ENCODE measurements at regions of chr4 and their contacts with region 1.

Region 1: GRCh38 chr4:185534866-185535611 is at the start of gene PDLIM3:
- DNase-seq: peak; percentile 83 to 94
- ATAC-seq: peak; percentile 22 to 81 (median 78)
- H3K4me3 ChIP-seq: peak within 1 kb of the TSS; percentile 90
- H3K27ac ChIP-seq: peak within 1 kb of the TSS; percentile 99
- H3K4me1 ChIP-seq: peaks cover 5% of the 10 kb centered on the region
- H3K27me3 ChIP-seq: no peaks in the 10 kb centered on the region
- CTCF ChIP-seq: no peak
- total RNA-seq, gene PDLIM3: 2,718 to 5,341 (median 3,828) TPM

Region 2: GRCh38 chr4:185573651-185574199 is 38.7 kb after region 1 on chr4:
- intact Hi-C with region 1: loop called (anchors 2 to 5 kb)
- DNase-seq: peak; percentile 52 to 83
- ATAC-seq: peak; percentile 69 to 85 (median 79)
- H3K4me3 ChIP-seq: peak overlapping the region; percentile 69
- H3K27ac ChIP-seq: peak overlapping the region; percentile 97
- H3K4me1 ChIP-seq: peaks cover 49% of the 10 kb centered on the region
- H3K27me3 ChIP-seq: no peaks in the 10 kb centered on the region
- CTCF ChIP-seq: no peak

Measured in psoas muscle (tissue), 8 donors.